Right cardiac atrium (tissue), 5 donors: ENCODE measurements at regions of chr5 and their contacts with region 1.

Region 1: GRCh38 chr5:123423278-123424149 is at the start of gene CEP120:
- DNase-seq: peak; percentile 99 to 100 (median 99)
- ATAC-seq: peak; percentile 100
- H3K4me3 ChIP-seq: peak within 1 kb of the TSS; percentile 88
- H3K27ac ChIP-seq: peak within 1 kb of the TSS; percentile 91
- H3K4me1 ChIP-seq: no peaks in the 10 kb centered on the region
- H3K27me3 ChIP-seq: no peaks in the 10 kb centered on the region
- total RNA-seq, gene CEP120: 11.1 to 16.1 (median 14.0) TPM

Region 2: GRCh38 chr5:123511648-123512605 is 88.4 kb after region 1 on chr5 and contains the start of gene CSNK1G3:
- intact Hi-C with region 1: loop called in 3 of 4 experiments (anchors 5 to 10 kb)
- DNase-seq: peak; percentile 98
- ATAC-seq: peak; percentile 99
- H3K4me3 ChIP-seq: peak within 1 kb of the TSS; percentile 100
- H3K27ac ChIP-seq: peak within 1 kb of the TSS; percentile 95
- H3K4me1 ChIP-seq: peaks cover 4% of the 10 kb centered on the region
- H3K27me3 ChIP-seq: no peaks in the 10 kb centered on the region
- total RNA-seq, gene CSNK1G3: 30.9 to 37.3 (median 33.9) TPM

Region 3: DNA sequence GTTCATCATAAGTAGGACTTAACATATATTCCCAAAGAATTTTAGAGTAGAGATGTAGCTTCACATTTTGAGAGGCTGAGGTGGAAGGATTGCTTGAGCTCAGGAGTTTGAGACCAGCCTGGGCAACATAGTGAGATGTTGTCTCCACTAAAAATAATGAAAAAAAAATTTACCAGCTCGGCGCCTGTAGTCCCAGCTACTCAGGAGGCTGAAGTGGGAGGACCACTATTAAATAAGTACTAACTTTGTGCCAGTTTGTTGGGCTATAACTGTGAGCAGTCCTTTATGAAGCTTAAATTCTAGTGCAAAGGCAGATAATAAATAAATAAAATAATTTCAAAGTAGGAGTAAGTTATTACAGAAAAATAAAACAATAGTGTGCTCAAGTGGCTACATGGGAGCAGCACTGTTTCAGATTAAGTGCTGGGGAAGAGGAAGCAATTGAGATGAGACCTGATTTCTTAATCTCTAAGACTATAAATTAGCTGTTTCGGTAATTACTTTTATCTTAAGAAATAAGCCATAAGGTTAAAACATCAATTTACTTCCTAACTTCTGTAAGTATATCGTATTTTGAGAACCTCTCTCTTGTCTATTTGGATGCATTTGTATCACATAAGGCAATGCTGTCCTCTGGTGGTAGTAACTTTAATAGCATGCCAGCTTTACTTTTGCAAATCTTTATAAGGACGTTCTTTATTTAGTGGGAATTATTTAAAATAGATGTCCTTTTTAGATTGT is 187.3 kb after region 1 on chr5:
- intact Hi-C with region 1: loop called in 3 of 4 experiments (anchors 5 to 10 kb)
- DNase-seq: no peak
- ATAC-seq: peak; percentile 47 to 56
- H3K4me3 ChIP-seq: no peak overlapping the region
- H3K27ac ChIP-seq: no peak overlapping the region
- H3K4me1 ChIP-seq: no peaks in the 10 kb centered on the region
- H3K27me3 ChIP-seq: no peaks in the 10 kb centered on the region